Lower leg skin (tissue), 4 donors: ENCODE measurements at regions of chr10 and their contacts with region 1.

Region 1: DNA sequence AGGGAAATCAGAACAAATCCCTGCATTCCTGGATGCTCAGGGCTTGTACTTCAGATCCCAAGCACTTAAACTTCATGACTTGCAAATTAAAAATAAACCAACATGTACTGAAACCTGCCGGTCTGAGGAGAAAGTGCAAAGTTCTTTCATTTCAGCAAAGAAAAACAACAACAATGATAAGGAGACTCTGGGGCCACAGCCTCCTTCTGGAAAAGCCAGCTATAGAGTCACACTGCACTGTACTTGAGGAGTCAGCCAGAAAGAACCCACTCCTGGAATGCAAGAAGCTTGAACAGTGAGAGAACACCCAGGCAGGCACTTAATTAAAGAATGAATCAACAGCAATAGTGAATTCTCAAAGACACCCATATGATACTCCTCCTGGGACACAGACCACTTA is 49.7 kb upstream of the TM9SF3 start:
- DNase-seq: no peak
- H3K4me3 ChIP-seq: no peak overlapping the region
- CTCF ChIP-seq: no peak
- POLR2A ChIP-seq: no peak

Region 2: DNA sequence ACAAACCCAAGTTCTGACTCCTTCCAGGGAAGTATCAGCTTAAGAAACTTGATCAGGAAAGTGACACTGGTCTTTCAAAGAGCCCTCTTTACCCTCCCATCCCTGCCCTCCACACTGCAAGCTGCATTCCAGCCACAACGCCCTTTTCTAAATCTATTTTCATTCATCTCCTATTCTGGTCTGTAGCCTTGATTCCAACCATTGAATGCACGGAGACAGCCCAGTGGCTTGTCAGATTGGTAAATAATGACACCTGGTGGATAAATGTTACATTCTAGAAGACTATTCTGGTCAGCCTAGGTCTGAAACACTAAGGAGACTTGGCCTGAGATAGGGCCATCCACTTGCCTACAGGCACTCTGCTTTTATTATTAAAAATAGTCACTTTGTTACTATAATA is 975.8 kb after region 1 on chr10:
- intact Hi-C with region 1: loop called (anchors 5 kb)
- DNase-seq: no peak
- H3K4me3 ChIP-seq: no peak overlapping the region
- CTCF ChIP-seq: no peak
- POLR2A ChIP-seq: no peak